SK-N-SH (cell line): ENCODE measurements at regions of chr1 and their contacts with region 1.

Region 1: DNA sequence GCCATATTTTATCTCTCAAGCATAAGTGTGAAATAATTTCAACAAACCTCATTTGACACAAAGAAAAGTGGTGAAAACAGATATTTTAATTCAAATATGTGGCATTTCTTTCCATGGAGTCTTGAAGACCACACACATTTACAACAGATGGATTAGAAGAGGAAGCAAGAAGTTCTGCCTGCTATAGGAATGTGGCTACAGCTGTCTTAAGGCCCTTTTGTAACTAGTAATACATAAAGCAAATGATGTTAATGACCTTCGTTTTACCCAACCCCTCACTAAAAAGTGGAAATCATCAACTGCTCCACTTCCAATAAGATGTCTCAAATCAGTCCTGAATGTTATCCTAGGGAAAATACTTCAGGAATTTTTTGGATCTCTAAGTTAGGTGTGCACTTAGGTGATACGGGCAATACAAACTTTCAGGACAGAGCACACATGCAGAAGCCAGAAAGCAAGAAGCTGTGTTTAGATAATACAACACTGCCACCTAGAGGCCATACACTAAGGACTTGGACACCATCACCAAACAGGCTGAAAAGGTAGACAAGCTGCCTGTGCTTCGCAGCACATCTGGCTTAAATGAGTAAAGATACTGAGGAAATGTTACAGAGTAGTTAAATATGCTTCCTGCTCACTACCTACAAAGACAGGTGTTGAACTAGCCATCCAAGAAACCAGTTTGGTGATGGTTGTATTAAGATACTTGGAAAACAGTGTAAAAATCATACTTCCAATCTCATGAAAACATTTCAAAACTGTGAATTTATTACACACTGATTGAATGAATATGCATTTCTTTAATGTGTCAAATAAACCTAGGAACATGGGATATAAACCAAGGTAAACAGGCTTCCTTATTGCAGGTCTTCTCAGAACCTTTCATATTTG is 24.4 kb downstream of the RRAGC start:
- DNase-seq: peak; percentile 64
- H3K4me3 ChIP-seq: no peak overlapping the region
- H3K27ac ChIP-seq: no peak overlapping the region
- H3K4me1 ChIP-seq: no peaks in the 10 kb centered on the region
- H3K27me3 ChIP-seq: peaks cover 16% of the 10 kb centered on the region; the same call in 1 of the 2 replicates
- CTCF ChIP-seq: peak; percentile 81
- EP300 ChIP-seq: no peak
- RAD21 ChIP-seq: peak; percentile 90

Region 2: GRCh38 chr1:38026592-38027200 is 808.5 kb before region 1 on chr1:
- CTCF ChIA-PET with region 1: interaction called, 14 read pairs
- POLR2A ChIA-PET with region 1: no interaction called
- DNase-seq: no peak
- H3K4me3 ChIP-seq: peak overlapping the region in 1 of 2 experiments; percentile 21; a peak in 1 of 4 replicates
- H3K27ac ChIP-seq: no peak overlapping the region
- H3K4me1 ChIP-seq: peaks cover 31 to 34% of the 10 kb centered on the region in 2 experiments; a peak in 3 of 4 replicates
- H3K27me3 ChIP-seq: no peaks in the 10 kb centered on the region
- CTCF ChIP-seq: peak; percentile 81
- EP300 ChIP-seq: no peak
- RAD21 ChIP-seq: peak; percentile 75

Region 3: GRCh38 chr1:38818175-38818976 is 16.8 kb before region 1 on chr1:
- CTCF ChIA-PET with region 1: interaction called, 58 read pairs
- POLR2A ChIA-PET with region 1: no interaction called
- DNase-seq: peak; percentile 94
- H3K4me3 ChIP-seq: peak overlapping the region; percentile 9 to 35; a peak in 2 of 4 replicates
- H3K27ac ChIP-seq: no peak overlapping the region
- H3K4me1 ChIP-seq: peaks cover 0 to 2% of the 10 kb centered on the region in 2 experiments; a peak in 1 of 4 replicates
- H3K27me3 ChIP-seq: peaks cover 92% of the 10 kb centered on the region
- CTCF ChIP-seq: peak; percentile 69
- EP300 ChIP-seq: no peak
- RAD21 ChIP-seq: peak; percentile 65

Region 4: DNA sequence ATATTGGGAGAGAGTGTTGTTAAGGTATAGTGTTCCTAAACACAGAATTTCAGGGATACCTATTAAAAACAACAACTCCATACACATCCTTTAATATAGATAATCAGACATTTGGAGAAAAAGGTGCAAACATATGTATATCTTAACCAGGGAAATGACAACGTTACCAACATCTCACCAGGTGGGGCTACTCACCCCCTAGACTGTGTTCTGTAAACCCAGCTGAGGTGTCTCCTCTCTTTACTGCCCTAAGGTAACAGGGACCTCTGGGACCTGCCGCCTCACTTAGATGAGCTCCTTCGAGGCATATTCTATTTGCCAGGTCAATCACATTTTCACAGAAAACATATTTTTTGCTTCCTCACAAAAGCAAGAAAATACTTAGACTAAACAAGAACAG is 11.0 kb after region 1 on chr1:
- CTCF ChIA-PET with region 1: interaction called, 18 read pairs
- POLR2A ChIA-PET with region 1: no interaction called
- DNase-seq: no peak
- H3K4me3 ChIP-seq: no peak overlapping the region
- H3K27ac ChIP-seq: no peak overlapping the region
- H3K4me1 ChIP-seq: no peaks in the 10 kb centered on the region
- H3K27me3 ChIP-seq: no peaks in the 10 kb centered on the region
- CTCF ChIP-seq: no peak
- EP300 ChIP-seq: no peak
- RAD21 ChIP-seq: no peak

Region 5: DNA sequence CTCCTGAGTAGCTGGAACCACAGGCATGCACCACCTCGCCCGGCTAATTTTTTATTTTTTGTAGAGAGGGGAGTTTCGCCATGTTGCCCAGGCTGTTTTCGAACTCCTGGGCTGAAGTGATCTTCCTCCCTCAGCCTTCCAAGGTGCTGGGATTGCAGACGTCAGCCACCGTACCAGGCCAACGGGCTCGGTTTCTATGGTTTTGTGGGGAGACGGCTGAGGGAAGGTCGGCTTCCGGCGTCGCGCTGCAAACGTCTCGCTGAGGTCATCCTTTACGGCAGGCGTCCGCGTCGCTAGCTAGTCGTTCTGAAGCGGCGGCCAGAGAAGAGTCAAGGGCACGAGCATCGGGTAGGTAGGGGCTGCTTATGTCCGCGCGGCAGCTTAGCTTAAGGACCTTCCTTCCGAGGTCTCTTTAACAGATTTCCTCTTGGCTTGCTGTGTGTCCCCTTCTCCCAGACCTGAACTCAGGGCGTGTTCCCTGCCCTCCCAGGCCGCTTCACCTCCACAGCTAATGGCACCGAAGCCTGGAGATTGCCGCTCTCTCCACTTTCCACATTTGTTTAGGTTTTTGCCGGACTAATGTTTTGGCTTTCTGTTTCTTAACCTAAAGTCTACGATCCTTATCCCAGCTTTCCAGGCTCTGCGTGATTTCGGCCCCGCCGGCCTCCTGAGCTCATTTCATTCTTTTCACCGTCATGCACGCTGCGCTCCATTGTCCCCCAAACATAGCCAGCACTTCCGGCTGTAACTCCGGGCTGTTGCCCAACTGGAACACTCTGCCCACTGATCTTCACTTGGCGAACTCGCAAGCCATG is 191.1 kb after region 1 on chr1 and contains the start of gene NDUFS5:
- CTCF ChIA-PET with region 1: no interaction called
- POLR2A ChIA-PET with region 1: no interaction called
- DNase-seq: peak; percentile 83
- H3K4me3 ChIP-seq: peak within 1 kb of the TSS; percentile 70 to 92
- H3K27ac ChIP-seq: peak within 1 kb of the TSS; percentile 90 to 99
- H3K4me1 ChIP-seq: peaks cover 4 to 5% of the 10 kb centered on the region in 2 experiments; a peak in 2 of 4 replicates
- H3K27me3 ChIP-seq: no peaks in the 10 kb centered on the region
- CTCF ChIP-seq: no peak
- EP300 ChIP-seq: no peak
- RAD21 ChIP-seq: no peak
- polyA plus RNA-seq, gene NDUFS5: 881 and 1,097 TPM in 2 replicates